ENCODE measurements at regions of chr2 and their contacts with region 1.

Region 1: GRCh38 chr2:47388888-47389287 is 14.1 kb upstream of the MSH2 start:
- DNase-seq: no peak
- H3K4me3 ChIP-seq: no peak overlapping the region
- H3K27ac ChIP-seq: no peak overlapping the region
- H3K4me1 ChIP-seq: no peaks in the 10 kb centered on the region
- H3K27me3 ChIP-seq: no peaks in the 10 kb centered on the region
- CTCF ChIP-seq: no peak
- EP300 ChIP-seq: no peak
- POLR2A ChIP-seq: no peak

Region 2: GRCh38 chr2:47237375-47237821 is 151.5 kb before region 1 on chr2:
- intact Hi-C with region 1: no loop called
- DNase-seq: no peak
- H3K4me3 ChIP-seq: no peak overlapping the region
- H3K27ac ChIP-seq: peak overlapping the region in 1 of 4 donors; percentile 53
- H3K4me1 ChIP-seq: peaks cover 0 to 22% (median 8%) of the 10 kb centered on the region in 4 donors
- H3K27me3 ChIP-seq: no peaks in the 10 kb centered on the region
- CTCF ChIP-seq: no peak
- EP300 ChIP-seq: no peak
- POLR2A ChIP-seq: no peak

Region 3: DNA sequence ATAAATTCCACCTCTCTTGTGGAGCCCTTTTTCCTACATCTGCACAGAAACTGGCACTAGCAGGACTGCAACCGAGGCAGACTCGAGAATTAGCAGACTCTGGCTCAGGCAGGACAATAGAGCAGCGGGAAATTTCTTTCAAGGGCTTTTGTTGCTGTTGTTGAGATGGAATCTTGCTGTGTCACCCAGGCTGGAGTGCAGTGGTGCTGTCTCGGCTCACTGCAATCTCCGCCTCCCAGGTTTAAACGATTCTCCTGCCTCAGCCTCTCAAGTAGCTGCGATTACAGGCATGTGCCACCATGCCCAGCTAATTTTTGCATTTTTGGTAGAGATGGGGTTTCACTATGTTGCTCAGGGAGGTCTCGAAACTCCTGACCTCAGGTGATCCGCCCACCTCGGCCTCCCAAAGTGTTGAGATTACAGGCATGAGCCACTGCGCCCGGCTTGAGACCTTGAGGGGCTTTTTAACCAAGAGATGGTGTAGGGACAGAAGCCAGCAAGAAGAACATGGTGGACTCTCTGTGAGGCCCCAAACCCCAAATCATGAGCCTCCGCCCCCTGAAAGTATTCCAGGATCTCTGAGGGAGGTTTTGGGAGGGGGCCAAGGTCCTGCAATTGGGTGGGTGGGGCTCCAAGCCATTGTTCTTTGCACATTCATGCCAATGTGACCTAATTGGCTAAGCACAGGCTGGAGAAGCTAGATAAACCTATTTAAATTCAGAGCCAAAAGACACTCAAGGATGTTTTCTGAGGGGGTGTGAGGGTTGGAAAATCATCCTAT is 54.3 kb before region 1 on chr2:
- intact Hi-C with region 1: loop called (anchors 1 kb)
- DNase-seq: no peak
- H3K4me3 ChIP-seq: no peak overlapping the region
- H3K27ac ChIP-seq: no peak overlapping the region
- H3K4me1 ChIP-seq: no peaks in the 10 kb centered on the region
- H3K27me3 ChIP-seq: no peaks in the 10 kb centered on the region
- CTCF ChIP-seq: no peak
- EP300 ChIP-seq: no peak
- POLR2A ChIP-seq: no peak

Region 4: GRCh38 chr2:47437287-47437686 is 48.4 kb after region 1 on chr2:
- intact Hi-C with region 1: no loop called
- DNase-seq: no peak
- H3K4me3 ChIP-seq: no peak overlapping the region
- H3K27ac ChIP-seq: no peak overlapping the region
- H3K4me1 ChIP-seq: no peaks in the 10 kb centered on the region
- H3K27me3 ChIP-seq: no peaks in the 10 kb centered on the region
- CTCF ChIP-seq: peak in 2 of 4 experiments; percentile 6 to 33
- EP300 ChIP-seq: no peak
- POLR2A ChIP-seq: no peak